ENCODE measurements at regions of chr6 and their contacts with region 1.

Region 1: DNA sequence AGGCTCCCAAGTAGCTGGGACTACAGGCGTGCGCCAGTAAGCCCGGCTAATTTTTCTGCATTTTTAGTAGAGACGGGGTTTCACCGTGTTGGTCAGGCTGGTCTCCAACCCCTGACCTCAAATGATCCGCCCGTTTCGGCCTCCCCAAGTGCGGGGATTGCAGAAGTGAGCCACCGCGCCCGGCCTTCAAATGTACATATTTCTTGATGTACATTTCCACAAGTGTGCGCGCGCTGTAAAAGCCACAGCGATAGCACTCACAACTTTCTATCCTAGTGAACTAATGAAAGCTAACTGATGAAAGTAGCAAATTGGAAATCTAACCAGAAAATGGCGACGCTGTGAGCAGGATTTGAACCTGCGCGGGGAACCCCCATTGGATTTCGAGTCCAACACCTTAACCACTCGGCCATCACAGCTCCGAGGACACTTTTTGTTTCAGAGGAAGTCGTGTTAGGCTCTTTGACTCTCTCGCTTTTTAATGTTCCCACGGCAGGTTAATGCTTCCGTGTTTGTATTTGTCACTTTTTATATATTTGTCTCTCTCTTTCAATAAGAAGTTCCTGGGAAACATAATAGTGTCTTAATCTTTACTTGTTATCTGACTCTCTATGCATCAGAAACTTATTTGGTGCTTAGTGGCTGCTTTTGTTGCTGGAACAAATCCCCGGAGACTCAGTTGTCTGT is 199.4 kb upstream of the ZNF184 start:
- DNase-seq: peak; percentile 80
- H3K4me3 Mint-ChIP-seq: peak overlapping the region; percentile 65
- H3K27ac Mint-ChIP-seq: peak overlapping the region; percentile 31
- H3K4me1 Mint-ChIP-seq: peaks cover 41% of the 10 kb centered on the region
- H3K27me3 Mint-ChIP-seq: peaks cover 69% of the 10 kb centered on the region

Region 2: GRCh38 chr6:27280064-27280539 is 392.2 kb before region 1 on chr6:
- intact Hi-C with region 1: loop called (anchors 5 kb)
- DNase-seq: peak; percentile 69
- H3K4me3 Mint-ChIP-seq: peak overlapping the region; percentile 57
- H3K27ac Mint-ChIP-seq: no peak overlapping the region
- H3K4me1 Mint-ChIP-seq: peaks cover 11% of the 10 kb centered on the region
- H3K27me3 Mint-ChIP-seq: peaks cover 61% of the 10 kb centered on the region

Region 3: GRCh38 chr6:27558028-27558724 is 114.1 kb before region 1 on chr6:
- intact Hi-C with region 1: loop called (anchors 2 kb)
- DNase-seq: no peak
- H3K4me3 Mint-ChIP-seq: peak overlapping the region; percentile 63
- H3K27ac Mint-ChIP-seq: no peak overlapping the region
- H3K4me1 Mint-ChIP-seq: peaks cover 6% of the 10 kb centered on the region
- H3K27me3 Mint-ChIP-seq: peaks cover 70% of the 10 kb centered on the region

Region 4: GRCh38 chr6:27608916-27609883 is 63.1 kb before region 1 on chr6:
- intact Hi-C with region 1: loop called (anchors 5 kb)
- DNase-seq: peak; percentile 76
- H3K4me3 Mint-ChIP-seq: no peak overlapping the region
- H3K27ac Mint-ChIP-seq: no peak overlapping the region
- H3K4me1 Mint-ChIP-seq: peaks cover 15% of the 10 kb centered on the region
- H3K27me3 Mint-ChIP-seq: peaks cover 28% of the 10 kb centered on the region

Region 5: DNA sequence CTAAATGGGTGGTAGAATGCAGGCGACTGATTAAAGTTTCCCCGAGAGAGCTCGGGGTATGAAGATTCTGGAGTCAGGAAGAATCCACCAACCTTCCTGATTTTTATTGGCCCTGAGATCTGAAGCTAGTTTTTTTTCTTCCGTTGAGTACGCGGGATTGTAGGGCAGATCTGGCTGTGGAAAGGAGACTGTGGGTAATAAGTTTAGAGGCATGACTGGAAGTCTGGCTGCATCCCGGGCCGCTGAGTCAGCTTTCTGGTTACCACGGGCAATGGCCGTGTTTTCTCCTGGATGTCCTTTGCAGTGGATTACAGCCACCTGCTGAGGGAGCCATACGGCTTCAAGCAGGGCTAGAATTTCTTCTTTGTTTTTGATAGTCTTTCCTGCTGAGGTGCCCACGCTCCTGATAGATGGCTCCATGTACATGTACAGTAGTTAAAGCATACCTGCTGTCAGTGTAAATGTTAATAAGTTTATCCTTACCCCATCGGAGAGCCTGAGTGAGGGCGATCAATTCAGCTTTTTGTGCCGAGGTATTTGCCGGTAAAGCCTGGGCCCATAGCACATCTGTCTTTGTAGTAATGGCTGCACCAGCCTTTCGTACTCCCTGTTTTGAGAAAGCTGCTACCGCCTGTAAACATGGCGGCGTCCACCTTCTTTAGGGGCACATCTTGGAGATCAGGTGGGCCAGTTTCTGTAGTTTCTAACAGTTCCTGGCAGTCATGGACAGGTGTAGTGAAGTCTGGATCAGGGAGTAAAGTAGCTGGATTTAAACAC is 1097.6 kb after region 1 on chr6:
- intact Hi-C with region 1: loop called (anchors 10 kb)
- DNase-seq: no peak
- H3K4me3 Mint-ChIP-seq: no peak overlapping the region
- H3K27ac Mint-ChIP-seq: no peak overlapping the region
- H3K4me1 Mint-ChIP-seq: peaks cover 5% of the 10 kb centered on the region
- H3K27me3 Mint-ChIP-seq: peaks cover 90% of the 10 kb centered on the region